HepG2 (cell line): ENCODE measurements at regions of chr14 and their contacts with region 1.

Region 1: GRCh38 chr14:66359500-66359899 is 126.7 kb upstream of the CCDC196 start:
- DNase-seq: peak; percentile 53
- ATAC-seq: no peak
- H3K4me3 ChIP-seq: no peak overlapping the region
- H3K27ac ChIP-seq: no peak overlapping the region
- H3K4me1 ChIP-seq: no peaks in the 10 kb centered on the region
- H3K27me3 ChIP-seq: no peaks in the 10 kb centered on the region
- CTCF ChIP-seq: peak; percentile 72
- EP300 ChIP-seq: no peak
- POLR2A ChIP-seq: no peak
- RAD21 ChIP-seq: no peak

Region 2: GRCh38 chr14:67111022-67111421 is 751.5 kb after region 1 on chr14:
- CTCF ChIA-PET with region 1: no interaction called
- POLR2A ChIA-PET with region 1: no interaction called
- in situ Hi-C with region 1: loop called (anchors 25 kb)
- intact Hi-C with region 1: loop called (anchors 10 kb)
- DNase-seq: no peak
- ATAC-seq: no peak
- H3K4me3 ChIP-seq: no peak overlapping the region
- H3K27ac ChIP-seq: no peak overlapping the region
- H3K4me1 ChIP-seq: no peaks in the 10 kb centered on the region
- H3K27me3 ChIP-seq: no peaks in the 10 kb centered on the region
- CTCF ChIP-seq: no peak
- EP300 ChIP-seq: no peak
- POLR2A ChIP-seq: no peak
- RAD21 ChIP-seq: no peak

Region 3: GRCh38 chr14:67335781-67336180 is 976.3 kb after region 1 on chr14:
- CTCF ChIA-PET with region 1: no interaction called
- POLR2A ChIA-PET with region 1: no interaction called
- in situ Hi-C with region 1: no loop called
- intact Hi-C with region 1: loop called (anchors 5 kb)
- DNase-seq: peak; percentile 56
- ATAC-seq: no peak; the same call in 2 of the 3 replicates
- H3K4me3 ChIP-seq: no peak overlapping the region
- H3K27ac ChIP-seq: no peak overlapping the region
- H3K4me1 ChIP-seq: no peaks in the 10 kb centered on the region
- H3K27me3 ChIP-seq: no peaks in the 10 kb centered on the region
- CTCF ChIP-seq: peak; percentile 49
- EP300 ChIP-seq: no peak
- POLR2A ChIP-seq: no peak
- RAD21 ChIP-seq: no peak